H1 (cell line): ENCODE measurements at regions of chr22 and their contacts with region 1.

Region 1: GRCh38 chr22:24423519-24424000 is 3.8 kb upstream of the ADORA2A start:
- DNase-seq: peak in 1 of 2 experiments; percentile 92
- H3K4me3 ChIP-seq: peak overlapping the region in 2 of 4 experiments; percentile 39 to 73; a peak in 4 of 8 replicates
- H3K27ac ChIP-seq: no peak overlapping the region
- H3K4me1 ChIP-seq: peaks cover 0 to 28% (median 20%) of the 10 kb centered on the region in 4 experiments; a peak in 6 of 7 replicates
- H3K27me3 ChIP-seq: peaks cover 3 to 23% (median 15%) of the 10 kb centered on the region in 4 experiments
- CTCF ChIP-seq: peak; percentile 60 to 91 (median 67)
- EP300 ChIP-seq: no peak
- POLR2A ChIP-seq: no peak
- RAD21 ChIP-seq: peak; percentile 45 to 69

Region 2: GRCh38 chr22:24393012-24393568 is 30.5 kb before region 1 on chr22:
- CTCF ChIA-PET with region 1: interaction called, 13 read pairs
- POLR2A ChIA-PET with region 1: interaction called, 3 read pairs
- DNase-seq: no peak
- H3K4me3 ChIP-seq: no peak overlapping the region
- H3K27ac ChIP-seq: 0 out of 2 replicates have a peak overlapping the region, but pooled peaks have one; percentile 8
- H3K4me1 ChIP-seq: no peaks in the 10 kb centered on the region
- H3K27me3 ChIP-seq: no peaks in the 10 kb centered on the region
- CTCF ChIP-seq: no peak
- EP300 ChIP-seq: no peak
- POLR2A ChIP-seq: no peak
- RAD21 ChIP-seq: no peak

Region 3: DNA sequence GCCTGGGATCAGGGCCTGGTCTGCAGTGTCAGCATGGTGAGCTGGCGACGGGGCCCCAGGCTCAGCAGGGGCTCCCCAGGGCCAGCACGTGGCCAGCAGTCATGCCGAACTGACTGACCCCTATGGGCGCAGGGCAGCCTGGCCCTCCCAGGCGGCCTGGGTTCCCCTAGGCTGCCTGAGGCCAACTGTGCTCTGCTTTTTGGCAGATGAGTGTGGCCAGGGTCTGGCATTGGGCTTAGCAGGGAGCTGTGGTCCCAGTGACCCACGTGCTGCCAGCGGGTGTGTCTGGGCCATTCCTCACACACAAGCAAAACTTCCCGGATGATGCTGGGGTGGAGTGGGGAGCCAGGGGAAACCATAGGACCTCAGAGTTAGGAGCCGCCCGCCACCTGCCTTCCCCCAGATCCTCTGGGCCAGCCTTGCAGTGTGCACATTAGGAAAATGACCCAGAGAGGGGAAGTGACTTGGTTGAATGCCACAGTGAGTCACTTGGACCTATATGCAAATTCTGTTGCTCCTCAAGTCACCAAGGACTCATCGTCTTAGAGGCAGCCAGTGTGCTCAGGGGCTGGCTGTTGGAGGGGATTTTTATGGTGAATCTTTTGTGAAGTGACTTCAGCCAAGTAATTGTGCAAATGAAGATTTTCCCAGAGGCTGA is 10.4 kb after region 1 on chr22:
- CTCF ChIA-PET with region 1: interaction called, 114 read pairs
- POLR2A ChIA-PET with region 1: interaction called, 3 read pairs
- DNase-seq: no peak
- H3K4me3 ChIP-seq: no peak overlapping the region
- H3K27ac ChIP-seq: no peak overlapping the region
- H3K4me1 ChIP-seq: peaks cover 2 to 3% (median 2%) of the 10 kb centered on the region in 4 experiments; a peak in 6 of 7 replicates
- H3K27me3 ChIP-seq: no peaks in the 10 kb centered on the region; a peak in 1 of 7 replicates
- CTCF ChIP-seq: no peak
- EP300 ChIP-seq: no peak
- POLR2A ChIP-seq: no peak
- RAD21 ChIP-seq: no peak

Region 4: DNA sequence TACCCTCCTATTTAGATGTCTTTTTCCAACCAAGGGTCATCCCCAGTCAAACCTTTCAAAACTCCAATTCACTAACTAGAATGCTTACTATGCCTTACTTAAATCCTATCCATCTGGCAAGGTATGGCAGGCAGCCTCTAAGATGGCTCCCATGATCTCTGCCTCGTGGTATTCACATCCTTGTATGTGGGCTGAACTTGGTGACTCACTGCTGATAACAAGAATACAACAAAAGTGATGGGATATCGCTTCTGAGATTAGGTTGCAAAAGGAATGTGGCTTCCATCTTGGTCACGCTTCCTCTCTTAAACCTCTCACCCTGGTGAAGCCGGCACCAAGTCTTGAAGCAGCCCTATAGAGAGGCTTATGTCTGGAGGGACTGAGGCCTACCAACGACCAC is 42.0 kb after region 1 on chr22:
- CTCF ChIA-PET with region 1: interaction called, 18 read pairs
- POLR2A ChIA-PET with region 1: no interaction called
- DNase-seq: no peak
- H3K4me3 ChIP-seq: no peak overlapping the region
- H3K27ac ChIP-seq: no peak overlapping the region
- H3K4me1 ChIP-seq: peaks cover 4 to 8% (median 6%) of the 10 kb centered on the region in 4 experiments; a peak in 5 of 7 replicates
- H3K27me3 ChIP-seq: no peaks in the 10 kb centered on the region
- CTCF ChIP-seq: no peak
- EP300 ChIP-seq: no peak
- POLR2A ChIP-seq: no peak
- RAD21 ChIP-seq: no peak

Region 5: DNA sequence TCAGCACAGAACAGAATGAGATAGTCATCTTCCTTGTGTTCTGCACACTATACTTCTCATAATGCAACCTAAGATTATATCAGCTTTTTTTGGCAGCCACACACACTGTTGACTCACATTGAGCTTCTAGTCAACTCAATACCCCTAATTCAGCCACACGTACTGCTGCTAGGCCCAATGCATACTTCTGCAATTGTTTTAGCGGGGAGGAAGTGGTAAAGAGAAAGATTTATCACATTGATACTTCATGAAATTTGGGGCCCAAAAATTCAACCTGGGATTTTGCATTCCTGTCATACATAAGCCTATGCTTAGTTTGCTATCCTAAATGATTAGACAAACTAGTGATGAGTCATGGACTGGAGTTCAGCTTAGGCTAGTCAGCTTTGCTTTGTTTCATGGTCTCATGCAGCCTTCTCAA is 63.0 kb after region 1 on chr22:
- CTCF ChIA-PET with region 1: interaction called, 14 read pairs
- POLR2A ChIA-PET with region 1: interaction called, 4 read pairs
- DNase-seq: no peak
- H3K4me3 ChIP-seq: no peak overlapping the region
- H3K27ac ChIP-seq: no peak overlapping the region
- H3K4me1 ChIP-seq: no peaks in the 10 kb centered on the region; a peak in 2 of 7 replicates
- H3K27me3 ChIP-seq: no peaks in the 10 kb centered on the region
- CTCF ChIP-seq: no peak
- EP300 ChIP-seq: no peak
- POLR2A ChIP-seq: no peak
- RAD21 ChIP-seq: no peak

Region 6: DNA sequence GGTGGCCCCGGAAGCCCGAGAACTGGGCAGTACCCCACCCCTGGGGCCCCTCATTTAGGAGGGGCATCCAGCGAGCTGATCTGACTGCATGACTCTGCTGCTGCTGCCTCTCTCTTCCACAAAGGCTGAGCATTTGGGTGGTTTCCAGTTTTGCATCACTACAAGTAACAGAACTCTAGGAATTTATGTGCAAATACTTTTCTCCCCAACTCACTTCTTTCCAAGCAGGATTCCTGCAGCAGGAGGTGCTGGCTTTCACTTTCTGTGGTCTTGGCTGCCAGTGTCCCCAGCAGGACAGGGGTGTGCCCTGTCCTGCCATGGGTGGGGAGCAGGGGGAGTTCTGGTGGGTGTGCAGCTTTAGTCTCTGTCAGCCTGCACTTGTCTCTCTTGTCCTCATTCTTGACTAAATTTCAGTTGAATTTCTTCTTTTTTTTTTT is 92.8 kb after region 1 on chr22:
- CTCF ChIA-PET with region 1: interaction called, 68 read pairs
- POLR2A ChIA-PET with region 1: interaction called, 3 read pairs
- DNase-seq: no peak
- H3K4me3 ChIP-seq: no peak overlapping the region
- H3K27ac ChIP-seq: no peak overlapping the region
- H3K4me1 ChIP-seq: peaks cover 0 to 6% (median 1%) of the 10 kb centered on the region in 4 experiments; a peak in 2 of 7 replicates
- H3K27me3 ChIP-seq: no peaks in the 10 kb centered on the region
- CTCF ChIP-seq: no peak
- EP300 ChIP-seq: no peak
- POLR2A ChIP-seq: no peak
- RAD21 ChIP-seq: no peak